ENCODE measurements at regions of chr1 and their contacts with region 1.

Region 1: DNA sequence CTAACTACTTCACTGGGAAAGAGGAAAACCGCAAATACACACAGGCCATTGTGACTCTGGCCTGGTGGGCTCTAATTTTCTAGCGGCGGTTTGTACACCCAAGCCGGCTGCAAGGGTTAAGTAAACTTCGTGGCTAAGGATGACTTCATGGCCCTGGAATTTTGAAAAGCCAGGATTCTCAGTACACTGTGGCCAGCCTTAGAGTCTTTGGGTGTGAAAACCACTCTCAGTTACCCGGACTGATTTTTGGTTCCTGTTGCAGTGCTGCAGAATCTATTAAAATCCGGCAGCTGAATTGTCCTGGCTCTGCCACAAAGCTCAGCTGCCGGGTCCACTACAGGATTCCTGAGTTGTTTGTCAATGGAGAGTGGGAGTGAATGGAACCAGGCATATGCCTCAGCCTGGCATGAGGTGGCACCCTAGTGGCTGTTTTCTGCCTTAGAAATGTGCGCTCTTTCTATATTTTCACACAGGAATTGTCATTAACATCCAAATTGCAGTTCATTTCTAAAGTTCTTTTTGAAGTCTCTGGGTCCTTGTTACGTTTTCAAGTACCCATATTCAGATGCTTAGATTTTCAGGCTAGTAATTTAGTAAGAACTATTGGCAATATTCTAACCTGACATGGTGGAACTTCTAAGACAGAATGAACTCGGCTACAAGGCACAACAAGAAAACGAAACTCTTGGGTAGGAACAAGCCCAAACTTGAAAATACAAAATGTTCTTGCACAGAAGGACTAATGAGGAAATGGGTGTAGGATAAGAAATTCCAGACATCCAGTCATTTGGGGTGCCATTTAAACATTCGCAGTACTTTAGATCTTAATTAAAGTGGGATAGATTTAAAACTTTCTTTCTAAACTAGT is 255.9 kb downstream of the NFIA start:
- DNase-seq: no peak
- ATAC-seq: peak; percentile 99
- H3K4me3 ChIP-seq: peak overlapping the region in 1 of 2 experiments; percentile 26; a peak in 1 of 4 replicates
- H3K27ac ChIP-seq: peak overlapping the region; percentile 72
- H3K4me1 ChIP-seq: peaks cover 19% of the 10 kb centered on the region
- H3K27me3 ChIP-seq: no peaks in the 10 kb centered on the region
- CTCF ChIP-seq: peak; percentile 89

Region 2: GRCh38 chr1:61056573-61057439 is 281.4 kb before region 1 on chr1:
- CTCF ChIA-PET with region 1: no interaction called
- POLR2A ChIA-PET with region 1: no interaction called
- in situ Hi-C with region 1: no loop called
- intact Hi-C with region 1: loop called (anchors 5 kb)
- DNase-seq: no peak
- ATAC-seq: peak; percentile 66
- H3K4me3 ChIP-seq: peak overlapping the region; percentile 78 to 81
- H3K27ac ChIP-seq: peak overlapping the region; percentile 45
- H3K4me1 ChIP-seq: peaks cover 39% of the 10 kb centered on the region
- H3K27me3 ChIP-seq: no peaks in the 10 kb centered on the region
- CTCF ChIP-seq: no peak

Region 3: DNA sequence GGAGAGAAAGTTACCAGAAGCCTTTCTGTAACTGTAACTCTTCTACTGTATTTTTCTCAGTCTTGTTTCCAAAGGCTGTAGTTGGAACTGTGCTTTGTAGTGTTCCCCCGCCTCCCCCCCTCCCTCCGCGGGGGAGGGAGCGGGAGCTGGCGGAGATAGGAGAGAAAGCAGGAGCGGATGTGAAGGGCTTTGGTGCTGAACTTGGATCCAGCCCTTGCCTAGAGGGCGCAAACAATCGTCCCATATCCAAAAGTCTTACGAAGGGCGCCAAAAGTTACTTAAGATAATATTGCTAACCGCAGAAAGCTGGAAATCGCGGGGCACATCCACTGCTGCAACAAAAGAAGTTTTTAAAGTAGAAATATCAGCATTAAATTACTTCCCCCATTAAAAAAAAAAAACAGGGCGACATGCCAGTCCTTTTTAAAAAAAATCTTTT is 258.3 kb before region 1 on chr1:
- CTCF ChIA-PET with region 1: no interaction called
- POLR2A ChIA-PET with region 1: interaction called, 5 read pairs
- in situ Hi-C with region 1: no loop called
- intact Hi-C with region 1: loop called (anchors 10 kb)
- DNase-seq: peak; percentile 65
- ATAC-seq: peak; percentile 54
- H3K4me3 ChIP-seq: peak overlapping the region; percentile 24 to 54
- H3K27ac ChIP-seq: peak overlapping the region; percentile 88
- H3K4me1 ChIP-seq: peaks cover 49% of the 10 kb centered on the region
- H3K27me3 ChIP-seq: no peaks in the 10 kb centered on the region
- CTCF ChIP-seq: peak; percentile 66

Region 4: GRCh38 chr1:62194651-62195544 is 856.7 kb after region 1 on chr1 and contains the start of gene L1TD1:
- CTCF ChIA-PET with region 1: no interaction called
- POLR2A ChIA-PET with region 1: no interaction called
- in situ Hi-C with region 1: no loop called
- intact Hi-C with region 1: no loop called
- DNase-seq: no peak
- ATAC-seq: no peak
- H3K4me3 ChIP-seq: no peak within 1 kb of the TSS
- H3K27ac ChIP-seq: no peak within 1 kb of the TSS
- H3K4me1 ChIP-seq: no peaks in the 10 kb centered on the region
- H3K27me3 ChIP-seq: no peaks in the 10 kb centered on the region
- CTCF ChIP-seq: no peak
- total RNA-seq, gene L1TD1: 0.18 TPM